Colonic mucosa (tissue), 4 donors: ENCODE measurements at regions of chr10 and their contacts with region 1.

Region 1: GRCh38 chr10:67697724-67698131 is 1.7 kb upstream of the CTNNA3 start:
- DNase-seq: peak; percentile 19
- H3K4me3 ChIP-seq: no peak overlapping the region
- H3K27ac ChIP-seq: no peak overlapping the region
- H3K4me1 ChIP-seq: no peaks in the 10 kb centered on the region
- H3K27me3 ChIP-seq: no peaks in the 10 kb centered on the region
- CTCF ChIP-seq: peak; percentile 78

Region 2: GRCh38 chr10:67779465-67780203 is 81.9 kb after region 1 on chr10:
- intact Hi-C with region 1: loop called (anchors 2 kb)
- DNase-seq: peak; percentile 83
- H3K4me3 ChIP-seq: no peak overlapping the region
- H3K27ac ChIP-seq: no peak overlapping the region
- H3K4me1 ChIP-seq: no peaks in the 10 kb centered on the region
- H3K27me3 ChIP-seq: no peaks in the 10 kb centered on the region
- CTCF ChIP-seq: peak; percentile 78